ENCODE measurements at regions of chr15 and their contacts with region 1.

Region 1: DNA sequence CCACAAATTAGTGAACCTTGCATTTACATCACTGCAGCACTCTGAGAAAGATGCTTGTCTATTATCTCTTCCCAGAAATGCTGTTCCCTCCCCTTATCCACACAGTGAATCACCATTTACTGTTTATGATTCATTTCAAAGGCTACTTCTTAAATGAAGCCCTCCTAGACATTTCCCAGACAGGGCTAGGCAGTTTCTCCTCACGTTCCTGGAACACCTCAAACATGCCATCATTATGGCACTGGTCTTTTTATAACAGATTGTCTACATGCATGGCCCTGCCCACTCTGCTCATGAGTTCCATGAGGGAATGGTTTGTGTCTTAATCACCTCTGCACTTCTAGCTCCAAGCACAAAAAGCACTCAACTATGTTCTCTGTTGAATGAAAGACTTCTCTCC is 32.2 kb upstream of the TM2D3 start:
- DNase-seq: peak; percentile 80
- ATAC-seq: peak; percentile 98
- H3K4me3 ChIP-seq: no peak overlapping the region
- H3K27ac ChIP-seq: 0 out of 2 replicates have a peak overlapping the region, but pooled peaks have one; percentile 7
- H3K4me1 ChIP-seq: peaks cover 11% of the 10 kb centered on the region
- H3K27me3 ChIP-seq: no peaks in the 10 kb centered on the region
- CTCF ChIP-seq: no peak

Region 2: DNA sequence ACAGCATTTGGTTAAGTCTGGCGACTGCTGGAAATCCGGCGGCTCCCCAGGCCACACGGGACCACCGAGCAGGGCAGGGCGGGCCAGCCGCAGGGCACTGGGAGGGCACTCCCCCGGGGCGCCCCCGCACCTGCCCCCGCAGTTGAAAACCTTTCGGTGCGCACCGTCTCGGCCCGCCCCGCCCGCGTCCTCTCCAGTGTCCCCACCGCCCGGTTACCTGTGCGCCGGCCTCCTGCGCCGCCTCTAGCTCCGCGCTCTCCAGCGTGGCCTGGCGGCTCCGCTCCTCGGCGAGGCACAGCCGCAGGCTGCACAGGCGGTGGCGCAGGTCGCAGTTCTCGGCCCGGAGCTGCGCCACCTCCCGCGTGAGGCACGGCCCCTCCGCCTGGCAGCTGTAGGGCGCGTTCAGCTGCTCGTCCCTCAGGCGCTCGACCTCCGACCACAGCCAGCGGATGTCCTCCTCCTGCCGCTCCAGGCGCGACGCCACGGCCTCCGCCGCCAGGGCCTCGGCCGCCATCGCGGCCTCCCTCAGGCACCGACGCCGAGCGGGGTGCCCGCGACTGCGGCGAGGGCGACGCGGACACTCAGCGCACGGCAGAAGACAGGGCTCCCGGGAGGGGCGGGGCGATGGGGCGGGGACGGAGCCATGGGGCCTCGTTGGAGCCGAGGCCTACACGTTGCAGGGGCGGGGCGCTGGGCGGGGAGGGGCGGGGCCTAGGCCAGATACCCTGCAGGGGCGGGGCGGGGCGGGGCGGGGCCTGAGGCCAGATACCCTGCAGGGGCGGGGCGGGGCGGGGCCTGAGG is 39.7 kb after region 1 on chr15 and contains the start of gene TARS3:
- CTCF ChIA-PET with region 1: no interaction called
- POLR2A ChIA-PET with region 1: no interaction called
- intact Hi-C with region 1: loop called (anchors 5 kb)
- DNase-seq: peak; percentile 83
- ATAC-seq: peak; percentile 97
- H3K4me3 ChIP-seq: peak within 1 kb of the TSS; percentile 78
- H3K27ac ChIP-seq: no peak within 1 kb of the TSS
- H3K4me1 ChIP-seq: peaks cover 5% of the 10 kb centered on the region; the same call in 1 of the 2 replicates
- H3K27me3 ChIP-seq: peaks cover 3% of the 10 kb centered on the region; the same call in 1 of the 2 replicates
- CTCF ChIP-seq: no peak
- total RNA-seq, gene TARS3: 5.4 and 8.1 TPM in 2 replicates